IMR-90 (cell line): ENCODE measurements at regions of chr12 and their contacts with region 1.

Region 1: DNA sequence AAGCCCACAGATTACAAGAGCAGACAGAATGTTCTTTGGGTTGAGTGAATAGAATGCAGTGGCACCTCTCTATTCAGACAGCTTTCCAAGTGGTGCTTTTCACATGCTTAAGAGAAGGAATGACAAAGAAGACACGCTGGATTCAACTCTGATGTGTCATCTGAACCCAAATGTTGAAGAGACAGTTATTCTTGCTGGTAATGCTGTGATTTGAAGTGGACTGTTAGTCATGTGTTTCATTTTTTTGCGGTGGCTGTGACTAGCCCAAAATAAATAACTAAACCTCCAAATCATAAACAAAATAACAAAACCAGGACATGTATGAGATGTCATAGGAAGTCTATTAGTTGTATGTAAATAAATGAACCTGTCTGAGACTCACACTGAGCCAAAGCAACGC is 391.8 kb upstream of the PRICKLE1 start:
- DNase-seq: peak; percentile 77
- ATAC-seq: peak; percentile 52
- H3K4me3 ChIP-seq: no peak overlapping the region
- H3K27ac ChIP-seq: no peak overlapping the region
- H3K4me1 ChIP-seq: peaks cover 2% of the 10 kb centered on the region; the same call in 1 of the 2 replicates
- H3K27me3 ChIP-seq: 0 out of 2 replicates have a peak, but pooled peaks cover 2% of the 10 kb centered on the region
- CTCF ChIP-seq: no peak
- POLR2A ChIP-seq: no peak
- RAD21 ChIP-seq: no peak

Region 2: DNA sequence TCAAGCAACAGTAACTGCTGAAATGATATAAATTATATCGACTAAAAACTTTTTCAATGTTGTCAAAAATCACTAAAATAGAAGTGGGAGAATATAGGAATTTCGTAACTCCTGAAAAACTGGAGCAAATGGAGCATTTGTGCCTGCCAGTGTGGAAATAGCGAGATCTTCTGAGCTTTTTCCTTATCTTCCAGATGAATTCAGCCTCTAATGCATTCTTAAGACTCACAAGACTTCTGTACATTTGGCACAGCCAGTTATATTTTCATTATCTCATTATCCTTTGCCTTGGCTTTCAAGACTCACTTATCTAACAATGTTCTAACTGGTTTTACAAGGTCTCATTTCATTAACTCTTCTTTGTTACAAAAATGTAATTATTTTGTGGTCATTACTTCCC is 1089.1 kb before region 1 on chr12:
- CTCF ChIA-PET with region 1: no interaction called
- POLR2A ChIA-PET with region 1: no interaction called
- dilution Hi-C with region 1: no loop called
- in situ Hi-C with region 1: no loop called
- intact Hi-C with region 1: no loop called
- DNase-seq: no peak
- ATAC-seq: no peak
- H3K4me3 ChIP-seq: no peak overlapping the region
- H3K27ac ChIP-seq: no peak overlapping the region
- H3K4me1 ChIP-seq: no peaks in the 10 kb centered on the region
- H3K27me3 ChIP-seq: no peaks in the 10 kb centered on the region
- CTCF ChIP-seq: no peak
- POLR2A ChIP-seq: no peak
- RAD21 ChIP-seq: no peak

Region 3: GRCh38 chr12:42761601-42762350 is 219.6 kb before region 1 on chr12:
- CTCF ChIA-PET with region 1: no interaction called
- POLR2A ChIA-PET with region 1: interaction called, 10 read pairs
- dilution Hi-C with region 1: no loop called
- in situ Hi-C with region 1: no loop called
- intact Hi-C with region 1: no loop called
- DNase-seq: no peak
- ATAC-seq: no peak
- H3K4me3 ChIP-seq: no peak overlapping the region
- H3K27ac ChIP-seq: no peak overlapping the region
- H3K4me1 ChIP-seq: peaks cover 12% of the 10 kb centered on the region
- H3K27me3 ChIP-seq: no peaks in the 10 kb centered on the region
- CTCF ChIP-seq: no peak
- POLR2A ChIP-seq: no peak
- RAD21 ChIP-seq: no peak

Region 4: GRCh38 chr12:42992826-42993225 is 11.4 kb after region 1 on chr12:
- CTCF ChIA-PET with region 1: no interaction called
- POLR2A ChIA-PET with region 1: interaction called, 13 read pairs
- dilution Hi-C with region 1: no loop called
- in situ Hi-C with region 1: no loop called
- intact Hi-C with region 1: no loop called
- DNase-seq: no peak
- ATAC-seq: no peak
- H3K4me3 ChIP-seq: no peak overlapping the region
- H3K27ac ChIP-seq: no peak overlapping the region
- H3K4me1 ChIP-seq: no peaks in the 10 kb centered on the region
- H3K27me3 ChIP-seq: peaks cover 3% of the 10 kb centered on the region; the same call in 1 of the 2 replicates
- CTCF ChIP-seq: no peak
- POLR2A ChIP-seq: no peak
- RAD21 ChIP-seq: no peak